Astrocyte of the cerebellum (primary cell): ENCODE measurements at regions of chr7 and their contacts with region 1.

Region 1: GRCh38 chr7:100837099-100837836 is 9.9 kb upstream of the EPHB4 start:
- DNase-seq: peak; percentile 80
- H3K4me3 ChIP-seq: peak overlapping the region; percentile 32
- CTCF ChIP-seq: no peak

Region 2: DNA sequence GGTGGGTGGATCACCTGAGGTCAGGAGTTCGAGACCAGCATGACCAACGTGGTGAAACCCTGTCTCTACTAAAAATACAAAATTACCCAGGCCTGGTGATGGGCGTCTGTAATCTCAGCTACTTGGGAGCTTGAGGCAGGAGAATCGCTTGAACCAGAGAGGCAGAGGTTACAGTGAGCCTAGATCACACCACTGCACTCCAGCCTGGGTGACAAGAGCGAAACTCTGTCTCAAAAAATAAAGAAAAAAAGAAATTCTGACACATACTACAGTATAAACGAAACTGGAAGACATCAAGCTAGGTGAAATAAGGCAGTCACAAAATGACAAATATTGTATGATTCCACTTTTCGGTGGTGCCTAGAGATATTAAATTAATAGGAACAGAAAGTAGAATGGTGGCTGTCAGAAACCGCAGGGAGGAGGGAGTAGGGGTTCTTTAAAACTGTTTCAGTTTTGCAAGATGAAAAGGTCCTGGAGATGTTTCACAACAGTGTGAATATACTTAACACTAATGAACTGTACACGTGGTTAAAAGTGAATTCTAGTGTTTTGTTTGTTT is 440.8 kb before region 1 on chr7:
- in situ Hi-C with region 1: no loop called
- DNase-seq: no peak
- H3K4me3 ChIP-seq: no peak overlapping the region
- CTCF ChIP-seq: no peak

Region 3: GRCh38 chr7:100719523-100720319 is 117.5 kb before region 1 on chr7:
- in situ Hi-C with region 1: loop called (anchors 10 kb)
- DNase-seq: no peak
- H3K4me3 ChIP-seq: no peak overlapping the region
- CTCF ChIP-seq: peak; percentile 39

Region 4: DNA sequence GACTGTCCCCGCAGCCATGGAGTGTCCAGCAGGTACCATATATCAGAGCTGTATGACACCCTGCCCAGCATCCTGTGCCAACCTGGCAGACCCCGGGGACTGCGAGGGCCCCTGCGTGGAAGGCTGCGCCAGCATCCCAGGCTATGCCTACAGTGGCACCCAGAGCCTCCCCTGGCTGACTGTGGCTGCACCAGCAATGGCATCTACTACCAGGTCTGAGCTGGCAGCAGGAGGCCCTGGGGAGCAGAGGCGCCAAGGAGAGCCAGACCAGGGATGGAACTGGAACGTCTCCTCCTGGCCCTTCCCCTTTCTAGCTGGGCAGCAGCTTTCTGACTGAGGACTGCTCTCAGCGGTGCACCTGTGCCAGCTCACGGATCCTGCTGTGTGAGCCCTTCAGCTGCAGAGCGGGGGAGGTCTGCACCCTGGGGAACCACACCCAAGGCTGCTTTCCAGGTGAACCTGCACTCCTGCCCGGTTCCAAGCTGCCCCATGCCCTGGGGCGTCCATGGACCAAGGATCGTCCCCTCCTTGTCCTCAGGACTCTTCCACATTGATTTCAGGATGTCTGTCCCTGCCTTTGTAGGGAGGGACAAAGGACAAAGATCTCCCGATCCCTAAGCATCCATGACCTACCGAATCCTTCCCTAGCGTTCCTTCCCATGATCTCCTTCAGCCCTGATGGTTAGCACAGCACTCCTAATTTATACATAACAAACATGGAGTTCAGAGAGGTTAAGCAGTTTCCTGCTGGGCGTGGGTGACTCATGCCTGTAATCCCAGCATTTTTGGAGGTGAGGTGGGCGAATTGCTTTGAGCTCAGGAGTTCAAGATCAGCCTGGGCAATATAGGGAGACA is 43.2 kb before region 1 on chr7:
- in situ Hi-C with region 1: no loop called
- DNase-seq: no peak
- H3K4me3 ChIP-seq: no peak overlapping the region
- CTCF ChIP-seq: no peak

Region 5: GRCh38 chr7:100896732-100897608 is 59.7 kb after region 1 on chr7:
- in situ Hi-C with region 1: no loop called
- DNase-seq: no peak
- H3K4me3 ChIP-seq: peak overlapping the region; percentile 26
- CTCF ChIP-seq: peak; percentile 70